Astrocyte of the cerebellum (primary cell): ENCODE measurements at regions of chr12 and their contacts with region 1.

Region 1: GRCh38 chr12:32671930-32672780 is 6.9 kb upstream of the DNM1L start:
- DNase-seq: peak; percentile 76
- H3K4me3 ChIP-seq: no peak overlapping the region
- CTCF ChIP-seq: peak; percentile 59

Region 2: DNA sequence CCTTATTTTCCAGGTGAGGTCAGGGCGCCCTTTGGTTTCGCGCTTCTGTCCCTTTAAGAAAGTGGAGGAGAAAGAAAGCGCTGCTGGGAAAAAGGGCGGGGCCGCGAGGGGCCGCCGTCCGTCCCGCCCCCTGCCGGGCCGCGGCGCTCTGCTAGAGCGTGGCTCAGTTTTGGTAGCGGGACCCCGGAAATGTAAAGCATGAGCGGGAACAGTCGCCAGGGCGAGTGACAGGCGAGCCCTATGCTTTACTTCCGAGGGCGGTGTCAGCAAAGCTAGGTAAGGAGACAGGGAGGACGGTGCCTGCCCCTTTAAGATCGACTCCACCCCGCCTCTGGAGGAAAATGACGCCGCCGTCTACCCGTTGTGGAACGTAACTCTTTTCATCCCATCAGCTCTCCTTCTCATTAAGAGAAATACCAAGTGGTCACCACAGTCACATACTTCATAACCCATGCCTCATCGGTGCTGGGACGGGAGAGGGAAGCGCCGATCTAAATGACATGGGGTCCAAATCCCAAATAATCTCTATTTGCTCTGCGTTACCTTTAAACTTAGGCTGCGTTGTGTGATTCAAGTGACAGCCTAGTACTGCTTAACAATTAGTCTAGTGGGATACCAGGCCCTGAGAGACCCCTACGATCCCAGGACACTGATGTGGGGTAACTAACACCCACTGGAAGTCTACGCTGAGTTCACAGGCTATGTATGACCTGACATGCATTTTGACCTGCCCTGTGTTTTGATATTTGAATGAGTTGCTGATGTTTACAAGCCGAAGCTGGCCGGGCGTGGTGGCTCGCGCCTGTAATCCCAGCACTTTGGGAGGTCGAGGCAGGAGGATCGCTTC is 1012.8 kb before region 1 on chr12 and contains the start of gene ETFBKMT:
- in situ Hi-C with region 1: loop called (anchors 25 kb)
- DNase-seq: peak; percentile 59
- H3K4me3 ChIP-seq: peak within 1 kb of the TSS; percentile 75
- CTCF ChIP-seq: peak; percentile 38

Region 3: GRCh38 chr12:32365473-32366064 is 306.6 kb before region 1 on chr12:
- in situ Hi-C with region 1: loop called (anchors 5 kb)
- DNase-seq: peak; percentile 72
- H3K4me3 ChIP-seq: no peak overlapping the region
- CTCF ChIP-seq: peak; percentile 73

Region 4: DNA sequence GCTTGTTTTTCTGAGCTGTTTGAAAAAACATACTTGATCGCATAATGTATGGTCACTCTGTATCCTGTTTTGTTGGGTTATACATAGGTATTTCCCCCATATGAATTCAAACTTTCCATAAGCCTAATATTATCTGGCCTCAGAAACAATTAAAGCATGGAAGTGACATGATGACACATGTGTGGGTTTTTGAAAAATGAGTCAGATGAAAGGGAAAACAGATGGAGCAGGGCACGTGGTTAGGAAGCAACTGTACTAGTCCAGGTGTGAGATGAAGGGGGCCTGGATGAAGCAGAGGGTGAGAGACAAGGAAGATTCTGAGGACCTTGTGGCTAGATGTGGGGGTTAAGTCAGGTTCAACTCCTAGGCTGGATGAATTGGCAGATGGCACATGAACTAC is 85.8 kb before region 1 on chr12:
- in situ Hi-C with region 1: no loop called
- DNase-seq: peak; percentile 20
- H3K4me3 ChIP-seq: no peak overlapping the region
- CTCF ChIP-seq: no peak

Region 5: GRCh38 chr12:32718926-32719325 is 46.8 kb after region 1 on chr12:
- in situ Hi-C with region 1: no loop called
- DNase-seq: no peak
- H3K4me3 ChIP-seq: no peak overlapping the region
- CTCF ChIP-seq: no peak

Region 6: DNA sequence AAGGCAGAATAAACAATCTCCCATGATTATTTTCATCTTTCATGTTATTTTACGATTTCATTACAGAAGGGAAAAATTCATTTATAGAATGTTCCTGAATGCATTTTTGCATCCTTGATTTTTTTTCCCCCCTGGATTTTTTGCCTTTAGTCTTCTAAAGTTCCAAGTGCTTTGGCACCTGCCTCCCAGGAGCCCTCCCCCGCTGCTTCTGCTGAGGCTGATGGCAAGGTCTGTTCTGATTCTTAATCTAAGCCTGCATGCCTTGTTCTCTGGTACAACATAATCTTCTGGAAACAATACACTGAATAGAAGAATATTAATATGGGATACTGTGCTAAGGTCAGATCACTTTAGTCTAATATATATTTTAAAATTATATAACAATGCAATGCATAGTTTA is 65.6 kb after region 1 on chr12:
- in situ Hi-C with region 1: loop called (anchors 5 kb)
- DNase-seq: no peak
- H3K4me3 ChIP-seq: no peak overlapping the region
- CTCF ChIP-seq: no peak

Region 7: GRCh38 chr12:32801269-32801980 is 129.3 kb after region 1 on chr12:
- in situ Hi-C with region 1: no loop called
- DNase-seq: no peak
- H3K4me3 ChIP-seq: no peak overlapping the region
- CTCF ChIP-seq: no peak